AG04450 (cell line): ENCODE measurements at regions of chr17 and their contacts with region 1.

Region 1: GRCh38 chr17:8409966-8410864 is 12.6 kb upstream of the RNF222 start:
- DNase-seq: peak; percentile 71
- H3K4me3 ChIP-seq: no peak overlapping the region
- H3K27ac ChIP-seq: no peak overlapping the region
- H3K27me3 ChIP-seq: peaks cover 5% of the 10 kb centered on the region
- CTCF ChIP-seq: peak; percentile 84

Region 2: GRCh38 chr17:8420041-8420934 is 10.1 kb after region 1 on chr17:
- CTCF ChIA-PET with region 1: interaction called, 16 read pairs
- POLR2A ChIA-PET with region 1: no interaction called
- DNase-seq: no peak
- H3K4me3 ChIP-seq: no peak overlapping the region
- H3K27ac ChIP-seq: no peak overlapping the region
- H3K27me3 ChIP-seq: peaks cover 26% of the 10 kb centered on the region
- CTCF ChIP-seq: no peak

Region 3: DNA sequence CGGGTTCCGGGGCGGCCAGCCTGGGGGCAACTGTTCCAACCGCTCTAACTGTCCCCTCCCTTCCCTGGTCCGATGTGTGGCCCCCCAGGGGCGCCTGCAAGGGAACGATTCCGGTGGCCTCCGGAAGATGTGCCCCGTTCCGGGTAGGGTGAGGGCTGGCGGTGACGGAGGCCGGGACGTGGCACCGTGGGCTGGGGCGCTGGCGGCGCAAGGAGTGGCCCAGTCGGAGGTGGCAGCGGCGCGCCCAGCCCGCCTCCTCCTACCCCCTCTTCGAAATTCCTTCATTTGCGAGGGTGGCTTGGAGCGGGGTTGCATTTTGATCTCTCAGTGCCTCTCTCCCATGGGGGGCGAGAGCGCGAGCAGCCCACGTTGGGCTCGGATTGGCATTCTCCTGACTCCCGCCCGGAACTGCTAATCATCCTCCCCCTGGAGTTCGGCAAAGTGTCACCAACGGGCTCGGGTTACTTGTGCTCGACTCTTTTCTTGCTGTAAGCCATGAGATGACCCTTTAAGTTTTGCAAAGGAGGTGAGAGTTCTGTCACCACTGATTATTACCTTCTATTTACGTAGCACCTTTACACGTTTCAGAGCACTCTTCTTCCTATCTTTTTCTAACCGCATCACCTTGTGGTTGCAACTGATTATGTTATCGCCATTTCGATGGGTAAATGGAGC is 26.1 kb after region 1 on chr17:
- CTCF ChIA-PET with region 1: interaction called, 12 read pairs
- POLR2A ChIA-PET with region 1: interaction called, 6 read pairs
- DNase-seq: no peak
- H3K4me3 ChIP-seq: peak overlapping the region; percentile 93
- H3K27ac ChIP-seq: peak overlapping the region; percentile 98
- H3K27me3 ChIP-seq: no peaks in the 10 kb centered on the region
- CTCF ChIP-seq: no peak

Region 4: GRCh38 chr17:8785547-8786413 is 375.6 kb after region 1 on chr17:
- CTCF ChIA-PET with region 1: interaction called, 70 read pairs
- POLR2A ChIA-PET with region 1: no interaction called
- DNase-seq: peak; percentile 29
- H3K4me3 ChIP-seq: no peak overlapping the region
- H3K27ac ChIP-seq: no peak overlapping the region
- H3K27me3 ChIP-seq: peaks cover 8% of the 10 kb centered on the region
- CTCF ChIP-seq: peak; percentile 90